Activated naive CD4-positive, alpha-beta T cell treated with anti-CD3 and anti-CD28 coated beads for 36 hours (primary cell): ENCODE measurements at regions of chr14 and their contacts with region 1.

Region 1: DNA sequence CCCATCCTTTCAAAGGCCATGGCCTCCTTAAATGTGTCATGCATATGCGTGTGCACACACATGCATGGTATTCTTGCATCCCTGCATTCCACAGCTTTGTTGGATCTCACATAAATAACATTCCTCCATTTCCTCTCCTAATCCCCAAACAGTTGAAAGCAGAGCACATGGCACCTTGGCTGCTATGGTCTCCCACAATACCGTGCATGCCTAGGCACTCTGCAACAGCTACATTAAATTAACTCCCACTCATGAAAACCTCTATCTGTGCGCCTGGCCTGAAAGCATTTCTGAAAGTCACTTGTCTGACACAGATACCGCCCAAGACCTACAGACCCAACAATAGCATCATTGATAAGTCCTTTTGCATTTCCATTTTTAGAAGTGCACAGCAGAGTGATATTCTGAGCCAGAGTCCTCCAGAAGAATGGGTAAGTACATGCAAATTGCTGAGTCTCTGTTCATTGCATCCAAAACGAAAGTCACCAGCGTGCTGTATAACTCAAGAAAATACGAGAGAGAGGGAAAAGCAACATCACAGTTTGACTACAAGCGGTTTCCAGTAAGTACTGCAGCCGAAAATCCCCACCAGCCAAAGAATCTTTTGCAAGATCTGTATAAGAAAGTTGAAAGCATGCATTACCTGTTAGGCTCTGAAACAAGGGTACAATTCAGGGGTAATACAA is 436 bp downstream of the ASB2 start:
- DNase-seq: peak; percentile 65
- H3K4me3 Mint-ChIP-seq: peak overlapping the region; percentile 55
- H3K27ac Mint-ChIP-seq: peak overlapping the region; percentile 95
- H3K4me1 Mint-ChIP-seq: peaks cover 85% of the 10 kb centered on the region
- H3K27me3 Mint-ChIP-seq: no peaks in the 10 kb centered on the region

Region 2: GRCh38 chr14:93994919-93995682 is 19.2 kb after region 1 on chr14:
- CTCF ChIA-PET with region 1: interaction called, 53 read pairs
- intact Hi-C with region 1: loop called (anchors 1 kb)
- DNase-seq: peak; percentile 68
- H3K4me3 Mint-ChIP-seq: no peak overlapping the region
- H3K27ac Mint-ChIP-seq: no peak overlapping the region
- H3K4me1 Mint-ChIP-seq: peaks cover 22% of the 10 kb centered on the region
- H3K27me3 Mint-ChIP-seq: no peaks in the 10 kb centered on the region

Region 3: GRCh38 chr14:94026173-94026888 is 50.4 kb after region 1 on chr14 and contains the start of gene OTUB2:
- CTCF ChIA-PET with region 1: interaction called, 5 read pairs
- intact Hi-C with region 1: loop called (anchors 2 kb)
- DNase-seq: peak; percentile 99
- H3K4me3 Mint-ChIP-seq: peak within 1 kb of the TSS; percentile 68
- H3K27ac Mint-ChIP-seq: no peak within 1 kb of the TSS
- H3K4me1 Mint-ChIP-seq: peaks cover 34% of the 10 kb centered on the region
- H3K27me3 Mint-ChIP-seq: no peaks in the 10 kb centered on the region
- total RNA-seq, gene OTUB2: 1.6 to 1.7 TPM